CD4-positive, alpha-beta memory T cell (primary cell): ENCODE measurements at regions of chrX and their contacts with region 1.

Region 1: GRCh38 chrX:106611679-106612392 is at the start of gene RADX:
- DNase-seq: peak; percentile 81 to 94 (median 89)
- H3K4me3 ChIP-seq: peak within 1 kb of the TSS; percentile 66 to 73
- H3K4me3 Mint-ChIP-seq: peak within 1 kb of the TSS; percentile 84 to 96 (median 93)
- H3K27ac ChIP-seq: peak within 1 kb of the TSS; percentile 81
- H3K27ac Mint-ChIP-seq: peak within 1 kb of the TSS; percentile 92 to 99 (median 95)
- H3K4me1 ChIP-seq: peaks cover 25% of the 10 kb centered on the region
- H3K4me1 Mint-ChIP-seq: peaks cover 14 to 40% (median 29%) of the 10 kb centered on the region in 4 donors
- H3K27me3 ChIP-seq: no peaks in the 10 kb centered on the region
- H3K27me3 Mint-ChIP-seq: no peaks in the 10 kb centered on the region
- total RNA-seq, gene RADX: 15.6 to 16.2 TPM

Region 2: GRCh38 chrX:106022238-106022637 is 589.6 kb before region 1 on chrX:
- CTCF ChIA-PET with region 1: no interaction called
- POLR2A ChIA-PET with region 1: no interaction called
- intact Hi-C with region 1: no loop called
- DNase-seq: no peak
- H3K4me3 ChIP-seq: no peak overlapping the region
- H3K4me3 Mint-ChIP-seq: no peak overlapping the region
- H3K27ac ChIP-seq: no peak overlapping the region
- H3K27ac Mint-ChIP-seq: no peak overlapping the region
- H3K4me1 ChIP-seq: no peaks in the 10 kb centered on the region
- H3K4me1 Mint-ChIP-seq: no peaks in the 10 kb centered on the region
- H3K27me3 ChIP-seq: no peaks in the 10 kb centered on the region
- H3K27me3 Mint-ChIP-seq: no peaks in the 10 kb centered on the region

Region 3: GRCh38 chrX:106415276-106415895 is 196.4 kb before region 1 on chrX:
- CTCF ChIA-PET with region 1: no interaction called
- POLR2A ChIA-PET with region 1: no interaction called
- intact Hi-C with region 1: loop called (anchors 2 kb)
- DNase-seq: peak in 4 of 5 donors; percentile 4 to 17 (median 6)
- H3K4me3 ChIP-seq: no peak overlapping the region
- H3K4me3 Mint-ChIP-seq: no peak overlapping the region
- H3K27ac ChIP-seq: no peak overlapping the region
- H3K27ac Mint-ChIP-seq: no peak overlapping the region
- H3K4me1 ChIP-seq: no peaks in the 10 kb centered on the region
- H3K4me1 Mint-ChIP-seq: peaks cover 0 to 2% (median 0%) of the 10 kb centered on the region in 4 donors
- H3K27me3 ChIP-seq: no peaks in the 10 kb centered on the region
- H3K27me3 Mint-ChIP-seq: peaks cover 0 to 1% of the 10 kb centered on the region in 2 donors

Region 4: GRCh38 chrX:106481341-106481740 is 130.5 kb before region 1 on chrX:
- CTCF ChIA-PET with region 1: interaction called, 4 read pairs
- POLR2A ChIA-PET with region 1: interaction called, 3 read pairs
- intact Hi-C with region 1: loop called (anchors 10 kb)
- DNase-seq: peak; percentile 31 to 46 (median 32)
- H3K4me3 ChIP-seq: no peak overlapping the region
- H3K4me3 Mint-ChIP-seq: no peak overlapping the region
- H3K27ac ChIP-seq: no peak overlapping the region
- H3K27ac Mint-ChIP-seq: no peak overlapping the region
- H3K4me1 ChIP-seq: peaks cover 16% of the 10 kb centered on the region
- H3K4me1 Mint-ChIP-seq: peaks cover 15 to 27% (median 20%) of the 10 kb centered on the region in 4 donors
- H3K27me3 ChIP-seq: no peaks in the 10 kb centered on the region
- H3K27me3 Mint-ChIP-seq: no peaks in the 10 kb centered on the region

Region 5: GRCh38 chrX:106802387-106803275 is 190.8 kb after region 1 on chrX and contains the start of gene TBC1D8B:
- CTCF ChIA-PET with region 1: no interaction called
- POLR2A ChIA-PET with region 1: no interaction called
- intact Hi-C with region 1: loop called (anchors 5 kb)
- DNase-seq: peak; percentile 5 to 36 (median 20)
- H3K4me3 ChIP-seq: peak within 1 kb of the TSS; percentile 36 to 52
- H3K4me3 Mint-ChIP-seq: peak within 1 kb of the TSS; percentile 89 to 97 (median 92)
- H3K27ac ChIP-seq: no peak within 1 kb of the TSS
- H3K27ac Mint-ChIP-seq: peak within 1 kb of the TSS in 4 of 7 donors; percentile 74 to 86 (median 82)
- H3K4me1 ChIP-seq: peaks cover 3% of the 10 kb centered on the region
- H3K4me1 Mint-ChIP-seq: peaks cover 6 to 17% (median 12%) of the 10 kb centered on the region in 4 donors
- H3K27me3 ChIP-seq: peaks cover 3% of the 10 kb centered on the region
- H3K27me3 Mint-ChIP-seq: peaks cover 4 to 11% of the 10 kb centered on the region in 2 donors
- total RNA-seq, gene TBC1D8B: 2.9 to 3.8 TPM

Region 6: GRCh38 chrX:108091266-108091877 is 1479.5 kb after region 1 on chrX and contains the starts of genes ATG4A and PSMD10:
- CTCF ChIA-PET with region 1: no interaction called
- POLR2A ChIA-PET with region 1: no interaction called
- intact Hi-C with region 1: loop called (anchors 2 kb)
- DNase-seq: peak; percentile 86 to 96 (median 90)
- H3K4me3 ChIP-seq: peak within 1 kb of the TSS; percentile 48 to 75
- H3K4me3 Mint-ChIP-seq: no peak within 1 kb of the TSS
- H3K27ac ChIP-seq: peak within 1 kb of the TSS; percentile 81
- H3K27ac Mint-ChIP-seq: no peak within 1 kb of the TSS
- H3K4me1 ChIP-seq: peaks cover 22% of the 10 kb centered on the region
- H3K4me1 Mint-ChIP-seq: peaks cover 5 to 17% (median 7%) of the 10 kb centered on the region in 4 donors
- H3K27me3 ChIP-seq: no peaks in the 10 kb centered on the region
- H3K27me3 Mint-ChIP-seq: no peaks in the 10 kb centered on the region
- total RNA-seq, gene ATG4A: 7.6 to 8.1 TPM
- total RNA-seq, gene PSMD10: 29.0 to 32.6 TPM